Psoas muscle (tissue), 8 donors: ENCODE measurements at regions of chr16 and their contacts with region 1.

Region 1: DNA sequence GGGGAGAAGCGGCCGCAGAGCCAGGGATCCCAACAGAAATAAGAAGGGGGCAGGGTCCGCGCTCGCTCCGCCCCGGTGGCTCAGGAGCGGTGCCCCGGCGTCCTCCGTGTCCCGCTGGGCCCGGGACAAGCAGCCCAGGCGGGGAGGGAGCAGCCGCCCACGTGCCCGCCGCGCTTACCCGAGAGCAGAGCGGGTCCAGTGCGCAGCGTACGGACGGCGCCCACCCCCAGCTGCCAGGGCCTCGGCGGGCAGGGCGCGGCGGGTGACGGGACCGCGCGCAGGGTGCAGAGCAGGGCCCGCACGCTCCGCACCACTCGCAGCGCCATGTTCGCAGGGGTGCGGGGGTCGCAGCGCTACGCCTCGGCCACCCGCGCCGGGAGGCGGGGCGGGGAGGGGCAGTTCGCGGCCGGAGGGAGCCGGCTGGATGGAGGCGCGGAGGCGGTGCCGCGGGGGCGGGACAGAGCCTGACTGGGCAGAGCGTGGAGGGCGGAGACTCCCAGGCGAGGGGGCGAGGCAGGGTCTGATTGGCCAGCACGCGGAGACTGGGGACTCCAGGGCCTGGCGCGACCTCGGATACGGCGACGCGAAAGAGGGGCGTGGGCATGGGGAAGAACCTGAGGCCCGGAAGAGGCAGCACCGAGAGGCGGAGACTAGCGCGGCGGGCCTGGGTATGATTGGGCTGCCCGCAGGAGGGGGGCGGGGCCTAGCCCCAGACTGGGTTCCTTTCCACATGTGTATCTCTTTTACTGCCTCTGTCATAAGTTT is at the start of gene GCSH:
- DNase-seq: peak; percentile 100
- ATAC-seq: peak; percentile 99 to 100 (median 99)
- H3K4me3 ChIP-seq: peak within 1 kb of the TSS; percentile 90
- H3K27ac ChIP-seq: peak within 1 kb of the TSS; percentile 84
- H3K4me1 ChIP-seq: peaks cover 4% of the 10 kb centered on the region
- H3K27me3 ChIP-seq: no peaks in the 10 kb centered on the region
- CTCF ChIP-seq: no peak
- total RNA-seq, gene GCSH: 29.1 to 51.5 (median 39.1) TPM

Region 2: DNA sequence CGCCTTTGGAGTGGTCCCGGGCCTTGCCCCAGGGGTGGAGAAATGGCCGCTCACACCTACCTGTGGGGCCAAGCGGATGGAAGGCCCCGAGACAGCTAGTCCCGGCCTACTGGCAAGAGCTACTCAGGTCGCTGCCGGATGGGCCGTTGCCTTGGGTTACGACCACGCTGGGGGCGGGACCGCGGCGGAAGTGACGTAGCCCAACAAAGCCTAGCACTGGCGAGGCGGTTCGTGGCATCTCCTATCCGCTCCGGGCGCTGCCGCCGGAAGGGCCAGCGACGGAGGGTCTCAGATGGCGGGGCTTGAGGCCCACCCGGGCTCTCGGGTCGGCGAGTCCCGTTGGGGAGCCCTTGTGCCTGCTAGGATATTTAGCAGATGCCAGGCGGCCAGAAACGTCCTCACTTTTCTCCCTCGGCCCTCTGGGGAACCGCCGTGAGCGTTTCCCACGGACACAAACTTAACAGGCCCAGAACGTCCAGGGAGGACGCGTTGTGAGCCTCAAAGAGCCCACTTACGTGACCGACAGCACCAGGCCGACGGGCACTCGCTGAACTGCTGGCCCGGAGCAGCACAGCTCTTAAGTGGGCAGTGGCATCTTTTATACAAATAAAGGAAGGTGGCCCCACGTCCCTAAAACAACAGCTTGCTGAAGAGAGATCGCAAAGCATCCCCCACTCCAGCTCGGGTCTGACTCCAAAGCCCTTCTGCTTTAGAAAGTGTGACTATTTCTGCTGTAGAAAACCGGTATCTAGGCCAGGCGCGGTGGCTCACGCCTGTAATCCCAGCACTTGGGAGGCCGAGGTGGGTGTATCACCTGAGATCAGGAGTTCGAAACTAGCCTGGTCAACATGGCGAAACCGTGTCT is 18.8 kb before region 1 on chr16 and contains the start of gene C16orf46:
- intact Hi-C with region 1: no loop called
- DNase-seq: peak; percentile 97 to 98
- ATAC-seq: peak; percentile 97 to 99 (median 98)
- H3K4me3 ChIP-seq: peak within 1 kb of the TSS; percentile 75
- H3K27ac ChIP-seq: peak within 1 kb of the TSS; percentile 95
- H3K4me1 ChIP-seq: no peaks in the 10 kb centered on the region
- H3K27me3 ChIP-seq: no peaks in the 10 kb centered on the region
- CTCF ChIP-seq: no peak
- total RNA-seq, gene C16orf46: 0.27 to 0.63 (median 0.46) TPM

Region 3: DNA sequence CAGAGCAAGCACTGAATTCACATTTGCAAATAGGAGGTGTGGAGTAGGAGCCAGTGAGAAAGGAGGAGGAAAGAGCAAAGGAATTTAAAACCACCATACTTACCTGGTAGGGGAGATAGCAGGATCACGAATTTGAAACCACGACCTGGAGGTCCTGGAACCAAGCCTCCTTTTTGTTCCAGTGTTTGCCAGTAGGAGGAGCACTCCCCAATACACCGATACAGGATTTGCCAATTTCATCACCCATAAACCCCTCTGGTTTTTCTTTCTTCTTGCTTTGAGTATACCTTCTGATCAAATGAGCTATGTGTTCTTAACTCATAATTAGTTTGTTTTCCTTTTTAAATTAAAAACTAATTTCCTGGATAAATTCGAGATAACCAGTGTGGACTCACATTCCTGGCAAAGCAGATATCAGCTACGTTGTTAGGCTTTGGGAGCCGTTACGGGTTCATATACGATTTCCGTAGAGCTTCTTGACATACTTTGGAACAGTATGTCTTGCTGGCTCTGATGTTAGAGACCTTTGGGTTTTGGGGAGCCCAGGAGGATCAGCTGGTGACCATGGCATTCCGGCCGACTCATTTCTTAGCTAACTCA is 165.0 kb after region 1 on chr16:
- intact Hi-C with region 1: no loop called
- DNase-seq: no peak
- ATAC-seq: no peak
- H3K4me3 ChIP-seq: no peak overlapping the region
- H3K27ac ChIP-seq: no peak overlapping the region
- H3K4me1 ChIP-seq: no peaks in the 10 kb centered on the region
- H3K27me3 ChIP-seq: no peaks in the 10 kb centered on the region
- CTCF ChIP-seq: peak; percentile 30

Region 4: DNA sequence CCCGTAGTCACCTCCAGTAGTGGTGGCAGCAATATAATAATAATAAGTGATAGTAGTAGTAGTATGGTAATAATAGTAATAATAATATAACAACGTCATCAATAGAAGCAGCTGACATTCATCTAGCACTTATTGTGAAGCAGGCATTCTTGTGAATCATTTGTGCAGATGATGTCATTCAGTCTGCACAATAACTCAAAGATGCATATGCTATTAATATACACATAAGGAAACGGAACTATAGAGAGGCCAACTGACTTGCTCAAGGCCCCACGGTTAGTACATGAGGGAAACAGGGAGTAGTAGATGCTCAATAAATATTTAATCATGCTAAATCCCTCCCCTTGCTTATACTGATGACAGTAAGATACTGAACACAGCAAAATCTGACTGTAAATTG is 183.3 kb after region 1 on chr16:
- intact Hi-C with region 1: no loop called
- DNase-seq: no peak
- ATAC-seq: no peak
- H3K4me3 ChIP-seq: no peak overlapping the region
- H3K27ac ChIP-seq: no peak overlapping the region
- H3K4me1 ChIP-seq: no peaks in the 10 kb centered on the region
- H3K27me3 ChIP-seq: no peaks in the 10 kb centered on the region
- CTCF ChIP-seq: no peak

Region 5: GRCh38 chr16:81314603-81315270 is 218.6 kb after region 1 on chr16 and contains the start of gene GAN:
- intact Hi-C with region 1: loop called (anchors 10 kb)
- DNase-seq: peak; percentile 95 to 96
- ATAC-seq: peak; percentile 98 to 99 (median 98)
- H3K4me3 ChIP-seq: peak within 1 kb of the TSS; percentile 98
- H3K27ac ChIP-seq: peak within 1 kb of the TSS; percentile 95
- H3K4me1 ChIP-seq: peaks cover 20% of the 10 kb centered on the region
- H3K27me3 ChIP-seq: no peaks in the 10 kb centered on the region
- CTCF ChIP-seq: no peak
- total RNA-seq, gene GAN: 5.5 to 8.3 (median 7.2) TPM